ENCODE measurements at regions of chr12 and their contacts with region 1.

Region 1: DNA sequence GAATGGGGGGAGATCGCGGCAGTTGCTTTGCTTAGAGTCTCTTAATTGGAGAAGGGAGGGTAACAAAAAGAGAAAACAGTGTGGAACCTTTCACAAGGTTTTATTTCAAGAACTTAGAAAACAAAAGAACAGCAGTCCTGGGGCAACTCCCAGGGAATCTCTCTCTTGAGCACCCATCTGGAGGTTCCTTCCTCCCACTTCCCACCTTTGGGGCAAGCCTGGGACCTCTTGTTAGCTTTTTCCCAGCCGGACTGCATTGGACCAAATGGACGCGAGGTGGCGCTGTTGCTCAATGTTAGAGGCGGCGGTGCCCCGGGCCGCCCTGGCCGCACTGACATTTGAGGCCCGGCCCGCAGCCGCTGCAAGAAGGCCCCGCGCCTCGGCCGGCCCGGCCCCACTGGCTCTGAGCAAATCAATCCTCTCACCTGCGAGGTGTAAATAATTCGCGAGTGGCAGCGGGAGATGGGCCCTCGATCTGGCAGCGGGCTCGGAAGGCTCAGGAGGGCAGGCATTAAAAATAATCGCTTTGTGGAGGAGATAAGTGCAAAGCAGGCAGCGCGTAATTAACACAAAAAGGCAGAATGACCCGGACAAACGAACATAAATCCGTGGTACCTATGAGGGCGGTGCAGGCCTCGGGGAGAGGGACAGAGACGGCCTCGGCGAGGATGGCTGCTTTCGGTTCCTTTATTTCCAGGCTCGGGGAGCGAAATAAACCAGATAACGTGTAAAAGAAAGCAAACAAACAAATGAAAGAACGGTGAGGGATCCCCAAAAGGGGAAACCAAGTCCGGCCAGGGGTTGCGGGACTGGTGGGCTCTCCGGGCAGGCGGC is 2.7 kb upstream of the HOXC8 start:
- DNase-seq: peak; percentile 90
- ATAC-seq: peak; percentile 83
- H3K4me3 Mint-ChIP-seq: peak overlapping the region; percentile 41
- H3K27ac Mint-ChIP-seq: no peak overlapping the region
- H3K4me1 Mint-ChIP-seq: peaks cover 20% of the 10 kb centered on the region
- H3K27me3 Mint-ChIP-seq: peaks cover 84% of the 10 kb centered on the region
- CTCF ChIP-seq: peak; percentile 94

Region 2: GRCh38 chr12:53952871-53953734 is 53.0 kb before region 1 on chr12:
- CTCF ChIA-PET with region 1: interaction called, 10 read pairs
- POLR2A ChIA-PET with region 1: interaction called, 6 read pairs
- intact Hi-C with region 1: no loop called
- DNase-seq: no peak
- ATAC-seq: no peak
- H3K4me3 Mint-ChIP-seq: no peak overlapping the region
- H3K27ac Mint-ChIP-seq: no peak overlapping the region
- H3K4me1 Mint-ChIP-seq: peaks cover 17% of the 10 kb centered on the region
- H3K27me3 Mint-ChIP-seq: peaks cover 93% of the 10 kb centered on the region
- CTCF ChIP-seq: no peak

Region 3: DNA sequence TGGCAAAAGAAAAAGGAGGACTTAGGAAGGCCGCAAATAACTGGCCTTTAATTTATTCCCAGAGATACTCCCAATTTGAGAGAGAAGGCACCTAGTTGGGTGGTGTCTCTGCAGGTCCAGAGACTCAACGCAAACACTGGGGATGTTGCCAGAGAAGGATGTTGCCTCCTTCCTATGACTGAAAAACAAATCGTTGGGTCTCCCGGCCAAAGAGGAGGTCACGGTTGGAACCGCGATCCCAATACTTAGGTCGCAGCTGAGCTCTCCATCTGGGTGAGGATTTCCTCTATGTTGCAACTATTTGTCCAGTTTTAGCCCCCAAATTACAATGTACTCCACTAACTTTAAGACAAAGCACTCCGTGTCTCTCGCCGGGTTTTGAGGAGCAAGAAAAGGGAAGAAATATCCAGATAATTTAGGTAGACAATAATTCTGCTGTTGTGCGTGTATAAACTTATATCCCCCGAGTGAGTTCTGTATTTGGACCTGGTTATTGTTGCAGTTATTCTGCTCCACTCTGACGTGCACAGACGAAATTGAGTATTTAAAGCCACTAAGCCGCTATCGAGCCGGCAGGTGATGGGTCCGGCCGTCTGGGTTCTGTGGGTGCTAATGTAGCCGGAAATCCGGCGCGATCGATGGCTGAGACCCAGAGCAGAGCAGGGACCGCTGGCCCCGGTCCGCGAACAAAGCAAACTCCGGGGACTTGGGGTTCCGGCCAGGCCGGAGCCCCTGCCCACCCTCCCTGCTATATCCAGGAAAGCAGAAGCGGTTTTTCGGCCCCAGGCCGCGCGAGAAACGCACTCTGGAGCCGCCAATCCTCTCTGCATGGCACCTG is 45.7 kb before region 1 on chr12:
- CTCF ChIA-PET with region 1: interaction called, 10 read pairs
- POLR2A ChIA-PET with region 1: no interaction called
- intact Hi-C with region 1: no loop called
- DNase-seq: no peak
- ATAC-seq: no peak
- H3K4me3 Mint-ChIP-seq: no peak overlapping the region
- H3K27ac Mint-ChIP-seq: no peak overlapping the region
- H3K4me1 Mint-ChIP-seq: peaks cover 30% of the 10 kb centered on the region
- H3K27me3 Mint-ChIP-seq: peaks cover 87% of the 10 kb centered on the region
- CTCF ChIP-seq: no peak

Region 4: DNA sequence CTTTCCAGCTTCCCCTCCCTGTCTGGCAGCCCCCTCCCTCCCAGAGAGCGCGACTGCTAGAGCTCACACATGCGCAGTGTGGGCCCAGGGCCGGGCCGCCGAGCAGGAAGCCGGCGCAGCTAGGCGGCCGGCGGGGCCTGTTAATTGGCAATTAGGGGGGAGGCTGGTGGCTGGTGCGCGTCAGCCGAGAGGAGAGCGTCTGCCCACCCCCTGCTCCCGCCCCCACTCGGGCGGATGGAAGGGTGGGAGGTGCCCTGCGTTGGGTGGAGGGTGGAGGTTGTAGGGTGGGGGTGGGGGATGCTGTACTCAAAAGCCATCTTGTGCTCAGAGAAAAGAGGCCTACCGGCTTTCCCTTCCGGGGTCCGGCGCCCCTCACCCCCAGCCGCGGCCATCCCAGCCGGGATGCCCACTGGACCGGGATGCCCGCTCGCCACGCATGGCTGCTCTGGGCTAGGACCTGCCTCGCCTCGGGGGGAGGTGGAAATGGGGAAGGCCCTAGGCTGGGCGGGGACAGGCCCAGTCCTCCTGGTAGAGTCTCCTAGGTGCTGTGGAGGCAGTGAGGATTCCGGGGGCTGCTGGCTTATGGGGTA is 11.9 kb after region 1 on chr12:
- CTCF ChIA-PET with region 1: interaction called, 22 read pairs
- POLR2A ChIA-PET with region 1: interaction called, 6 read pairs
- intact Hi-C with region 1: no loop called
- DNase-seq: peak; percentile 84
- ATAC-seq: peak; percentile 92
- H3K4me3 Mint-ChIP-seq: peak overlapping the region; percentile 76
- H3K27ac Mint-ChIP-seq: no peak overlapping the region
- H3K4me1 Mint-ChIP-seq: peaks cover 15% of the 10 kb centered on the region
- H3K27me3 Mint-ChIP-seq: peaks cover 67% of the 10 kb centered on the region
- CTCF ChIP-seq: no peak

Region 5: GRCh38 chr12:54191550-54192022 is 185.5 kb after region 1 on chr12:
- CTCF ChIA-PET with region 1: interaction called, 94 read pairs
- POLR2A ChIA-PET with region 1: interaction called, 3 read pairs
- intact Hi-C with region 1: loop called (anchors 5 kb)
- DNase-seq: peak; percentile 87
- ATAC-seq: peak; percentile 60
- H3K4me3 Mint-ChIP-seq: no peak overlapping the region
- H3K27ac Mint-ChIP-seq: no peak overlapping the region
- H3K4me1 Mint-ChIP-seq: peaks cover 18% of the 10 kb centered on the region
- H3K27me3 Mint-ChIP-seq: peaks cover 38% of the 10 kb centered on the region
- CTCF ChIP-seq: peak; percentile 74

Region 6: DNA sequence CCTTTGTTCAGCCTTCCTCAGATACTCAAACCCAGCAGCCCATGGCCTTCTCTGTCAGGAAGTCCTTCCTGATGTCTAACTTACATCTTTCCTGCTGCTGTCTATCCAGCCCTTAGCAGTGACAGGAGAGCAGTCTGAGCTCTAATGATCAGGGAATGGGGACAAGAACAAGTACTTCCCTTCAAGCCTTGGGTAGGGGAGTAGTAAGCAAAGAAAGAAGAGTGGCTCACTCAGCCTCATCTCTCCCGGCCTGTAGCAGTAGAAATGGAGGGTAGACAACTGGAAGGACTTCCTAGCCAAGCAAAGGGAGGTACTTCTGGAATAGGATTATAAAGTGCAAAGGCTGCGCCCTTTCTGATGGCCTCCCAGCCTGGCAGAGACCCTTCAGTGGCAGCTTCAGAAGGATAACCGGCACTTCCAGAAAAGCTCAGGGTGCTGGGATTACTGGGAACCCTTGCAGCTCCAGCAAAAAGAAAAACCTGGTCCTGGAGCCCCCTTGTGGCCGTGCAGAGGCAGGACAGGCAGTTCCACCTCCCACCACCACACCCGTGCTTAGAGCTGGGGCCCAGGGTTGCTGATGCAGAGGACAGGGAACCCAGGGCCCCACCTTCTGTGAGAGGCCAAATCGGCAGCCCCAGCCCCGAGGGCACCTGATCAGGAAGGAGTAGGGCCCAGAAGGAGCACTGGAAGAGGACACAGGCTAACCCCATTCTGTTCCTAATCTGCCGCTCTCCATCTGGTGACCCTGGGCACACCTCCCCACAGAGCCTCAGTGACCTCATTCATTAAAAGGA is 195.1 kb after region 1 on chr12:
- CTCF ChIA-PET with region 1: interaction called, 94 read pairs
- POLR2A ChIA-PET with region 1: no interaction called
- intact Hi-C with region 1: loop called (anchors 2 kb)
- DNase-seq: peak; percentile 72
- ATAC-seq: peak; percentile 96
- H3K4me3 Mint-ChIP-seq: no peak overlapping the region
- H3K27ac Mint-ChIP-seq: no peak overlapping the region
- H3K4me1 Mint-ChIP-seq: no peaks in the 10 kb centered on the region
- H3K27me3 Mint-ChIP-seq: peaks cover 52% of the 10 kb centered on the region
- CTCF ChIP-seq: peak; percentile 94

Region 7: DNA sequence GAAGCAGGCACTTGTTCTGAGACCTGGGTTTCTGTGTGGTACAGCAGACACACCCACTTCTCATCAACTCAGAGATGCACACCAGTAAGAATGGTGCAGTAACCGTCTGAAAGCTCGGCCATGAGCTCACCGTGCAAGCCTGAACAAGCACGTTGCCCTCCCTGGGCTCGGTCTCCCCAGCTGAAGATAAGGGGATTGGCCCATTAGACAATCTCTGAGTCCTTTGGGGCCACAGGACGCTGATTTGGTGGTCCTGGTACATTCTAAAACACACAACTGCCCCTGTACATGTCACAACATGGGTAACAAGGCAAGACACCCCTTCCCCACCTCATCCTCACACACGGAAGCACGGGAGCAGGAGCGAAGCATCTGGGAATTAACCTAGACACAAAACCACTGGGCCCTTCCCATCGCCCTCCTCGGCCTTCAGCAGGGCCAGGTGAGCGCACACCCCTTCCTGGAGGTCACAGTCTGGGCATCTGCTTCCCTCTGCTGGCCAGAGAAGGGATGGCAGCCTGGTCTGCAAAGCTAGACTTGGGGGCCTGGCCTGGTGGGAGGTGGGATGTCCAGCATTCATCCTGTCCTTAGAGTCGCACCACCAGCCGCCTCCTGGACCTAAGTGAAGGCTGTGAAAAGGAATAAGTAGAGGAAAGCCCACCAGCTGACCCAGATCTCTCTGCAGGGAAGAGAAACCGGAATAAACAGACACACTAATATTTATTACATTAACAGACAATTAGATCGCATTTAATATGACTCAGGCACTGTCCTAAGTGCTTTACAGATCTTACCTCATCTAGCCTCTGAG is 201.6 kb after region 1 on chr12:
- CTCF ChIA-PET with region 1: interaction called, 81 read pairs
- POLR2A ChIA-PET with region 1: no interaction called
- intact Hi-C with region 1: loop called (anchors 2 kb)
- DNase-seq: peak; percentile 90
- ATAC-seq: peak; percentile 96
- H3K4me3 Mint-ChIP-seq: no peak overlapping the region
- H3K27ac Mint-ChIP-seq: no peak overlapping the region
- H3K4me1 Mint-ChIP-seq: no peaks in the 10 kb centered on the region
- H3K27me3 Mint-ChIP-seq: peaks cover 15% of the 10 kb centered on the region
- CTCF ChIP-seq: peak; percentile 92

Measured in activated CD8-positive, alpha-beta T cell treated with anti-CD3 and anti-CD28 coated beads for 36 hours (primary cell).